PC-9 (cell line): ENCODE measurements at regions of chr7 and their contacts with region 1.

Region 1: GRCh38 chr7:87159538-87159937 is 7.3 kb downstream of the DMTF1 start:
- DNase-seq: no peak
- H3K4me3 ChIP-seq: no peak overlapping the region
- H3K27ac ChIP-seq: no peak overlapping the region
- H3K4me1 ChIP-seq: peaks cover 10% of the 10 kb centered on the region
- H3K27me3 ChIP-seq: no peaks in the 10 kb centered on the region
- CTCF ChIP-seq: no peak

Region 2: GRCh38 chr7:87344446-87344845 is 184.9 kb after region 1 on chr7:
- CTCF ChIA-PET with region 1: no interaction called
- POLR2A ChIA-PET with region 1: no interaction called
- intact Hi-C with region 1: no loop called
- DNase-seq: no peak
- H3K4me3 ChIP-seq: peak overlapping the region; percentile 93
- H3K27ac ChIP-seq: no peak overlapping the region
- H3K4me1 ChIP-seq: peaks cover 17% of the 10 kb centered on the region
- H3K27me3 ChIP-seq: no peaks in the 10 kb centered on the region
- CTCF ChIP-seq: no peak

Region 3: GRCh38 chr7:87448388-87448787 is 288.9 kb after region 1 on chr7:
- CTCF ChIA-PET with region 1: no interaction called
- POLR2A ChIA-PET with region 1: interaction called, 10 read pairs
- intact Hi-C with region 1: no loop called
- DNase-seq: no peak
- H3K4me3 ChIP-seq: no peak overlapping the region
- H3K27ac ChIP-seq: no peak overlapping the region
- H3K4me1 ChIP-seq: no peaks in the 10 kb centered on the region
- H3K27me3 ChIP-seq: no peaks in the 10 kb centered on the region
- CTCF ChIP-seq: no peak